Activated CD4-positive, alpha-beta T cell treated with anti-CD3 and anti-CD28 coated beads for 36 hours (primary cell): ENCODE measurements at regions of chr19 and their contacts with region 1.

Region 1: DNA sequence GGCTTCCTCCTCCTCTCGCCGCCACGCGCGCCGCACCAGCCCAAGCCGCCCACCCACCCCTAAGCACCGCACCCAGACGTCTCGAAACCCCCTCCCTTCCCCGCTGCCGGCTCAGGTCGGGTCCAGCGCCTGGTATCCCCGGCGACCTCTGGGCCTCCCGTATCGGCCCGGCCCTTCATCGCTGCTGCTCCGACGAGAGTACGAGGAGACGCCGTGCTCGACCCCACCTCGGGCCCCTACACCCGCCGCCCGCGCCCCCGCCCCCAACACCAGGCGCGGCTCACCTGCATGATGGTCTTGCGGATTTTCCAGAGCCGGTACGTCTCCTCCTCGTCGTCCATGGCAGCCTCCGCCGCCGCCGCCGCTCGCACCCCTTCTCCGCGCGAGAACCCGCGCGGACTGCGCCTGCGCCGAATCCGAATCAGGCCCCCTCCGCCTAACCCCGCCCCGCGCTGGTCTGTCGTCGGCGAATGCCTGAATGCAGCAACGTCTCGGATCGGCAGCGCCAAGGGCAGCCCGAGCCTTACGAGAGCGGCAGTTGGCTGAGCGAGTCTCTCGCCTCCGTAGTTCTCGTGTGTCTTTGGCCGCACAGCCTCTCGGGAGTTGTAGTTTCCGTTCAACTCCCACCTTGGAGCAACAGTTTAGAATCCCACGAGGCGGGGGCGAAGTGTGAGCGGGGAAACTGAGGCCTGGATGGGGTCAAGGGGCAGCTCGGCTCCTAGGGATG is at the start of gene POLR2E:
- DNase-seq: peak; percentile 99
- ATAC-seq: peak; percentile 89
- H3K4me3 Mint-ChIP-seq: peak within 1 kb of the TSS; percentile 88
- H3K27ac Mint-ChIP-seq: peak within 1 kb of the TSS; percentile 93
- H3K4me1 Mint-ChIP-seq: peaks cover 49% of the 10 kb centered on the region
- H3K27me3 Mint-ChIP-seq: no peaks in the 10 kb centered on the region
- total RNA-seq, gene POLR2E: 171 to 229 TPM

Region 2: DNA sequence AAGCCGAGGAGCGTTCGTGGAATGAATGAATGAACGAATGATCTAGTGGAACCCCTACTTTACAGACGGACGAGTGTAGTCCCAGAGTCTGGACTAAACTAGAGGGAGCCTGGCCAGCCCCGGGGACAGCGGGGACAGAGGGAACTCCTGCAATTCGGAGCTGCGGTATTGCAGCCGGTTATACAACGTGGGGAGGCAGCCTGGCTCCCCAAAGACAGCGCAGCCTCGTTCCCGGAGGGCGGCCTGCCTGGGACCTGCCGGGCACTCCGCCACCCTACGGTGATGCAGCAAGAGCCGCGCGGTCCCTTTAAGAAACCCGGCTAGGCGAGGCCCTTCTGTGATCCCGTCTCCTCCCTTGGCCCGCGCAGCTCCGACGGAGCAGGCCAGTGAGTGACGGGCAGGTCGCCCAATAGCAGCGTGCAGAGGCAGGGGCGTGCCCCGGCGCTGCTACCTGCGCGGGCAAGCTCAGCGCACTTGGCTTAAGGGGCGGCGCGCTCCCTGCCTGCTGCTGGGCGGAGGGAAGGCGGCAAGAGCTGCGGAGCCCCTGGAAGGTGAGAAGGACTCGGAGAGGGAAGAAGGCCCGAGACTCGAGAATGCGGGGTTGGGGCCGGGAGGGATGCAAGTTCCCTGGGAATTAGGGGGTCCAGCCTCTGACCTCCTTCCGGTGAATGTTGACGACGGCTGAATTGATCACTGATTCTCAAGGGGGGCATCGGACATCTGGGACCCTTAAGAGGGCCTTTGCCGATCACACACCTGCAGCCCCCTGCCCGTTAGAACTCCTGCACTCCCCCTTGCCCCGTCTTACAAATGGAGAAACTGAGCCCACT is 55.3 kb before region 1 on chr19 and contains the start of gene ABCA7:
- CTCF ChIA-PET with region 1: no interaction called
- POLR2A ChIA-PET with region 1: no interaction called
- intact Hi-C with region 1: loop called in 1 of 2 experiments (anchors 1 kb)
- DNase-seq: peak; percentile 100
- ATAC-seq: peak; percentile 96
- H3K4me3 Mint-ChIP-seq: peak within 1 kb of the TSS; percentile 86
- H3K27ac Mint-ChIP-seq: peak within 1 kb of the TSS; percentile 74
- H3K4me1 Mint-ChIP-seq: peaks cover 34% of the 10 kb centered on the region
- H3K27me3 Mint-ChIP-seq: no peaks in the 10 kb centered on the region
- total RNA-seq, gene ABCA7: 14.4 to 16.9 TPM

Region 3: DNA sequence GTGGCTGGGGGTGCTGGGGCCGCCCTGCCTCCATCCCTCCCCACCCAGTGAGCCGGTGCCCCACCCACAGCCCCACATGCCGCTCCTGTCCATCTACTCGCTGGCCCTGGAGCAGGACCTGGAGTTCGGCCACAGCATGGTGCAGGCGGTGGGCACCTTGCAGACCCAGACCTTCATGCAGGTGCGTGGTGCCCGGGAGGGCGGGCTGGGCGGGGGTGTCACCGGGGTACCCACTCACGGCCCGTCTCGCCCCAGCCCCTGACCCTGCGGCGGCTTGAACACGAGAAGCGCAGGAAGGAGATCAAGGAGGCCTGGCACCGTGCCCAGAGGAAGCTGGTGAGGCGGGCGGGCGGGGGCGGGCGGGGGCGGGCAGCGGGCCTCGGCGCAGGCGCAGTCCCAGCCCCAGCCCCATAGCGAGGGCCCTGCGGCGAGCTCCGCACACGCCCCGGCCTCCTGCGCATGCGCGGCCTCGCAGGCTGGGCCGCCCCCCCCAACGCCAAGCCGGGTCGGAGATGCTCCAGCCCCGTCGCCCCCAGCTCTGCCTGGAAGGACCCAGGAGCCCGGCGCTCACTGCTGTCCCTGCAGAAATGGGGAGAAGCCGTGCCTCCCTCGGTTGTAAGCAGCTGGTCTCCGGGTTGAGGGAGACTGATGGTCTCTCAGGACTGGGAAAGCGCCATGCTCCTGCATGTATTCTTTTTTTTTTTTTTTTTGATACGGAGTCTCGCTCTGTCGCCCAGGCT is 20.4 kb before region 1 on chr19:
- CTCF ChIA-PET with region 1: no interaction called
- POLR2A ChIA-PET with region 1: no interaction called
- intact Hi-C with region 1: loop called (anchors 1 kb)
- DNase-seq: peak; percentile 93
- ATAC-seq: peak; percentile 22
- H3K4me3 Mint-ChIP-seq: peak overlapping the region; percentile 52
- H3K27ac Mint-ChIP-seq: peak overlapping the region; percentile 84
- H3K4me1 Mint-ChIP-seq: peaks cover 63% of the 10 kb centered on the region
- H3K27me3 Mint-ChIP-seq: no peaks in the 10 kb centered on the region

Region 4: GRCh38 chr19:1082172-1082927 is 12.8 kb before region 1 on chr19:
- CTCF ChIA-PET with region 1: interaction called, 4 read pairs
- POLR2A ChIA-PET with region 1: interaction called, 5 read pairs
- intact Hi-C with region 1: loop called (anchors 1 kb)
- DNase-seq: peak; percentile 96
- ATAC-seq: peak; percentile 71
- H3K4me3 Mint-ChIP-seq: no peak overlapping the region
- H3K27ac Mint-ChIP-seq: no peak overlapping the region
- H3K4me1 Mint-ChIP-seq: peaks cover 60% of the 10 kb centered on the region
- H3K27me3 Mint-ChIP-seq: no peaks in the 10 kb centered on the region

Region 5: GRCh38 chr19:1269065-1269477 is 173.9 kb after region 1 on chr19 and contains the start of gene CIRBP:
- CTCF ChIA-PET with region 1: interaction called, 3 read pairs
- POLR2A ChIA-PET with region 1: interaction called, 5 read pairs
- intact Hi-C with region 1: loop called in 1 of 2 experiments (anchors 2 kb)
- DNase-seq: peak; percentile 100
- ATAC-seq: peak; percentile 87
- H3K4me3 Mint-ChIP-seq: peak within 1 kb of the TSS; percentile 84
- H3K27ac Mint-ChIP-seq: peak within 1 kb of the TSS; percentile 87
- H3K4me1 Mint-ChIP-seq: peaks cover 66% of the 10 kb centered on the region
- H3K27me3 Mint-ChIP-seq: no peaks in the 10 kb centered on the region
- total RNA-seq, gene CIRBP: 123 to 188 TPM